Activated CD4-positive, alpha-beta T cell treated with anti-CD3 and anti-CD28 coated beads for 36 hours (primary cell): ENCODE measurements at regions of chr6 and their contacts with region 1.

Region 1: DNA sequence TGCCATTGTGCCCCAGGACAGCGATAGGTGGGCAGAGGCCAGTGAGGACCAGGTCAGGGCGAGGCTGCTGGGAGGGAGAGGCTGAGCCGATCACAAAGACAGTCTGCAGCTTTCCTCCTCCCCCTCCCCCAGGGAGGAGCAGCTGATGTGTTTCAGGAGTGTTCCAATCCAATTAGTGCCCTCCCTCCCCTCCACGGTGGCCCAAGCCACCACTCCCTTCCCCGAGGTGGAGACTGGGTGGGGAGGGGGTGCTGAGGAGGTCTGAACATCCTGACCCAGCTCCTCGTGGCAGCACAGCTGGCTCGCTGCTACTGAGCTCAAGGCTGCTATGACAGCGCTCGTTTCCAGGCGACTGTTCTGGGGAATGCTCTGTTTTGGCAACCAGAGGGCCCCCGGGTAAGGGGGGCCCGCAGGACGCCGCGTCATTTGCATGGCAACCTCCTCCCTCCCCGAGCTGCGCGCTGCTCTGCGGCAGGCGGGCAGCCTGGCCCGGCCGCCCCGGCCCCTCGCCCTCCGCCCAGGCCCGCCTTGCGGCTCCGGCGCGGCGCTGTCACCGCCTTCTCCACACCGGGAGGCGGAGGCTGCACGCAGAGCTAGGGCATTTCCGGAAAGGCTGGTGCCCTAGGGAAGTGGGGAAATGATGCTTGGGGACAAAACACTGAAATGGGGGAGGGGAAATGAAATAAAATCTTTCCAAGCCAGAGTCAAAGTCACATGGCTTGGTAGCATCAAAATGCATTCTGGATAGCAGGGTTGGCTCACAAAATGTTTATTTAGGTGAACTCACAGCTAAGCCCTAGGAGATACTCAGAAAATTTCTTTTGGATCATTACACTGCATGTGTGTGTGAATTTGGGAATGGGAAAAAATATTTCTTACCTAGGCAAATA is 67.4 kb upstream of the PIM1 start:
- DNase-seq: peak; percentile 86
- ATAC-seq: peak; percentile 89
- H3K4me3 Mint-ChIP-seq: peak overlapping the region; percentile 60
- H3K27ac Mint-ChIP-seq: peak overlapping the region; percentile 86
- H3K4me1 Mint-ChIP-seq: peaks cover 28% of the 10 kb centered on the region
- H3K27me3 Mint-ChIP-seq: no peaks in the 10 kb centered on the region

Region 2: DNA sequence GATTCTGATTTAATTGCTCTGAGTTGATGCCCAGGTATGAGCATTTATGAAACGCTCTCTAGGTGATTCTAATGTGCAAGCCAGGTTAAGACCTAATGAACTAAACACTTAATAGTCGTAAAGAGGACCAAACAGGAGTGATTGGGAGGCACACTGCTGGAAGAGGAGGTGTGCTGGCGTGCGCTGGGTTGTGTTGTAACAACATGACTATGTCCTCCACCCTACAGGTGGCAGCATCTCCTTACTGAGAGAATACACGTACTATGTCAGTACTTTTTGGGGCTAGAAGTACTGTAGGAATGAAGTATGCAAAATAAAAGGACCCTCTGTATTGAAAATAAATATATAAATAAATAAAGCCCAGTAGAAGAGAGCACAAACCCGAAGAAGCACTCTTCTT is 204.9 kb before region 1 on chr6:
- CTCF ChIA-PET with region 1: no interaction called
- POLR2A ChIA-PET with region 1: no interaction called
- intact Hi-C with region 1: no loop called
- DNase-seq: peak; percentile 49
- ATAC-seq: peak; percentile 69
- H3K4me3 Mint-ChIP-seq: no peak overlapping the region
- H3K27ac Mint-ChIP-seq: no peak overlapping the region
- H3K4me1 Mint-ChIP-seq: peaks cover 11% of the 10 kb centered on the region
- H3K27me3 Mint-ChIP-seq: no peaks in the 10 kb centered on the region

Region 3: DNA sequence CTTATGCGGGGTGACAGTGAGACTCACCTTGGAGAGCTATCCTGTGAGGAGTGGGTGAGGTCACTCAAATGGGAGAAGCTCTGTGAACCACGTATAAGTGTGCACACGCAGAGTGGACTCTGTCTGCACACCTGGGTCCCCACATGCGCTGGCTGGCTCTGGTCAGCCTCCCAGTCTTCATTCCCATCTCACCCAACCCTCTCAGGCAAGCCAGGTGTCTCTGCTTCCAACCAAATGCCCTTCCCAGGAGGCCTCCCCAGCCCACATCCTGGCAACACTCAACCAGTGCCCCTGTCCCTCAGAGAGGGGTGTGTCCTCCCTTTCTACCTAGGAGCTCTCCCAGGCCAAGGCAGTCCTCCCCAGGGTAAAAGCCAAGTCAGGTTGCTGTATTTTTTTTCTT is 156.0 kb before region 1 on chr6:
- CTCF ChIA-PET with region 1: no interaction called
- POLR2A ChIA-PET with region 1: no interaction called
- intact Hi-C with region 1: no loop called
- DNase-seq: no peak
- ATAC-seq: no peak
- H3K4me3 Mint-ChIP-seq: no peak overlapping the region
- H3K27ac Mint-ChIP-seq: no peak overlapping the region
- H3K4me1 Mint-ChIP-seq: peaks cover 34% of the 10 kb centered on the region
- H3K27me3 Mint-ChIP-seq: no peaks in the 10 kb centered on the region

Region 4: DNA sequence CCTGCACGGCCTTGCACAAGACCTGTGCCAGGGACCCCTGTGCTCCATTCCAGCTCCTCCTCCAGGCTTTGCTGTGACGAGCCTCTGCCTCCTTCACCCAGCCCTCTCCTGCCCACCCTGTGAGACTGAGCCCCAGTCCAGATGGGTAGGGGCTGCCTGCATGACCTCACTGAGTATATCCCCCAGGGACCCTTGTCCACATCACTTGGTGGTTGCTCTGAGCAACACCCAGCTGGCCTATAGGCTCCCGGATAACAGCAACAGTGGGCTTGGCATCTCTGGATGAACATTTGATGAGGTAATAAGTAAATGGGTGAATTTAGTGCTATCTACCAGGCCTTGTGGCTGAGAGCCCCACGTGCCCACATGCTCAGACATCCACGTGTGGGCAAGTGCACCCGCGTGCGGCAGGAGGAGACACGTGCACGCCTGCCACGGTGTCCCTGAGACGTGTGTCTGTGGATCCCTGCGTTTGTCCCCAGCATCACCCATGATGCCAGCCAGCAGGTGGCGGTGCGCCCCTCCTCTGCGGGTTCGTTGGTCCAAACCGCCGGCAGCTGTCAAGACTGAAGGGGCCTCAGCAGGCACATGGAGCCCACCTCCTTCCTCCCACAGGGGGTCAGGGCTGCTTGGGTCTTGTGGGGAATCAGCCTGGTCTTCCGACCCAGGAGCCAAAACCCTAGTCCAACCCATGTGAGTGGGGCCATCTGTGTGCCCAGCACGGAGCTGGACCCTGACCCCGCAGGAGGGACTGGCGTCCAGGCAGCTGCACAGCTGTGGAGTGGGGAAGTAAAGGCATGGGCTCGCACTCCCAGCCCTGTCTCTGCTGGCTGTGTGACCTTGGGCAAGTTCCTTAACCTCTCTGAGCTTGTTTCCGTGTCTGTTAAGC is 51.1 kb before region 1 on chr6:
- CTCF ChIA-PET with region 1: interaction called, 8 read pairs
- POLR2A ChIA-PET with region 1: no interaction called
- intact Hi-C with region 1: loop called (anchors 1 to 5 kb)
- DNase-seq: peak; percentile 95
- ATAC-seq: peak; percentile 43
- H3K4me3 Mint-ChIP-seq: peak overlapping the region; percentile 79
- H3K27ac Mint-ChIP-seq: peak overlapping the region; percentile 100
- H3K4me1 Mint-ChIP-seq: peaks cover 55% of the 10 kb centered on the region
- H3K27me3 Mint-ChIP-seq: no peaks in the 10 kb centered on the region

Region 5: DNA sequence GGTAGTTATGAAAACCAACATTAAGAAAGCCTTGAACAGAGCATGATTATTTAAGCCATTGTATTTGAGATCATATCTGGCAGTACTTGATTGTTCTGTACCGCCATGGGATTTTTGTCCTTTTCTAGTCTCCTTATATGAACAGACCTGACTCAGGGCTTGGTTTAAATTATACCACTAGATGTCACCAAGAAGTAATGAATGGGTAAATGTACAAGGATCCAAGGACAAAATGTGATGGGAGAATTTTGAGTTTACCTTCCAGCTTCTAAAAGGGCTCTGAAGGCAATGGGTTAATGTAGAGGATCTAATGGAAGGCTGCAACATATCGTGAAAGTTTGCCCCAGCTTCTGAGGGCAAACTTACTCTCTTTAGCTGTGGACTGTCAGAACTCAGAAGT is 263.2 kb after region 1 on chr6:
- CTCF ChIA-PET with region 1: no interaction called
- POLR2A ChIA-PET with region 1: no interaction called
- intact Hi-C with region 1: no loop called
- DNase-seq: no peak
- ATAC-seq: no peak
- H3K4me3 Mint-ChIP-seq: no peak overlapping the region
- H3K27ac Mint-ChIP-seq: no peak overlapping the region
- H3K4me1 Mint-ChIP-seq: peaks cover 3% of the 10 kb centered on the region
- H3K27me3 Mint-ChIP-seq: no peaks in the 10 kb centered on the region